ENCODE measurements at regions of chr10 and their contacts with region 1.

Region 1: GRCh38 chr10:74075906-74076305 is 74.7 kb downstream of the AP3M1 start:
- DNase-seq: no peak
- ATAC-seq: no peak
- H3K4me3 ChIP-seq: 0 out of 2 replicates have a peak overlapping the region, but pooled peaks have one; percentile 6
- H3K27ac ChIP-seq: no peak overlapping the region
- H3K4me1 ChIP-seq: peaks cover 29% of the 10 kb centered on the region
- H3K27me3 ChIP-seq: no peaks in the 10 kb centered on the region
- CTCF ChIP-seq: no peak
- EP300 ChIP-seq: no peak
- POLR2A ChIP-seq: no peak
- RAD21 ChIP-seq: no peak

Region 2: GRCh38 chr10:73997787-73998622 is 77.9 kb before region 1 on chr10 and contains the start of gene VCL:
- CTCF ChIA-PET with region 1: interaction called, 11 read pairs
- POLR2A ChIA-PET with region 1: interaction called, 3 read pairs
- RAD21 ChIA-PET with region 1: interaction called, 3 read pairs
- SMC1A ChIA-PET with region 1: interaction called, 18 read pairs
- in situ Hi-C with region 1: no loop called
- intact Hi-C with region 1: no loop called
- DNase-seq: peak; percentile 64
- ATAC-seq: peak; percentile 99
- H3K4me3 ChIP-seq: peak within 1 kb of the TSS; percentile 86
- H3K27ac ChIP-seq: peak within 1 kb of the TSS; percentile 67
- H3K4me1 ChIP-seq: peaks cover 15% of the 10 kb centered on the region
- H3K27me3 ChIP-seq: no peaks in the 10 kb centered on the region
- CTCF ChIP-seq: no peak
- EP300 ChIP-seq: no peak
- POLR2A ChIP-seq: peak; percentile 92
- RAD21 ChIP-seq: no peak
- polyA plus RNA-seq, gene VCL: 6.7 to 9.2 TPM

Region 3: GRCh38 chr10:74058658-74059057 is 17.2 kb before region 1 on chr10:
- CTCF ChIA-PET with region 1: interaction called, 26 read pairs
- POLR2A ChIA-PET with region 1: interaction called, 5 read pairs
- RAD21 ChIA-PET with region 1: interaction called, 29 read pairs
- SMC1A ChIA-PET with region 1: interaction called, 71 read pairs
- in situ Hi-C with region 1: no loop called
- intact Hi-C with region 1: loop called (anchors 2 kb)
- DNase-seq: no peak
- ATAC-seq: peak; percentile 66
- H3K4me3 ChIP-seq: no peak overlapping the region
- H3K27ac ChIP-seq: no peak overlapping the region
- H3K4me1 ChIP-seq: peaks cover 23% of the 10 kb centered on the region
- H3K27me3 ChIP-seq: no peaks in the 10 kb centered on the region
- CTCF ChIP-seq: peak; percentile 4 to 44 (median 30); a peak in 3 of 6 replicates
- EP300 ChIP-seq: no peak
- POLR2A ChIP-seq: no peak
- RAD21 ChIP-seq: peak; percentile 77

Region 4: GRCh38 chr10:74103560-74104248 is 27.8 kb after region 1 on chr10:
- CTCF ChIA-PET with region 1: interaction called, 53 read pairs
- POLR2A ChIA-PET with region 1: interaction called, 4 read pairs
- RAD21 ChIA-PET with region 1: interaction called, 8 read pairs
- SMC1A ChIA-PET with region 1: interaction called, 18 read pairs
- in situ Hi-C with region 1: no loop called
- intact Hi-C with region 1: no loop called
- DNase-seq: no peak
- ATAC-seq: peak; percentile 85
- H3K4me3 ChIP-seq: no peak overlapping the region
- H3K27ac ChIP-seq: no peak overlapping the region
- H3K4me1 ChIP-seq: no peaks in the 10 kb centered on the region
- H3K27me3 ChIP-seq: no peaks in the 10 kb centered on the region
- CTCF ChIP-seq: peak; percentile 52 to 71 (median 67)
- EP300 ChIP-seq: no peak
- POLR2A ChIP-seq: no peak
- RAD21 ChIP-seq: peak; percentile 84

Region 5: GRCh38 chr10:74598891-74599566 is 523.1 kb after region 1 on chr10:
- CTCF ChIA-PET with region 1: no interaction called
- POLR2A ChIA-PET with region 1: no interaction called
- RAD21 ChIA-PET with region 1: no interaction called
- SMC1A ChIA-PET with region 1: no interaction called
- in situ Hi-C with region 1: no loop called
- intact Hi-C with region 1: no loop called
- DNase-seq: peak; percentile 78
- ATAC-seq: peak; percentile 95
- H3K4me3 ChIP-seq: no peak overlapping the region
- H3K27ac ChIP-seq: peak overlapping the region; percentile 46
- H3K4me1 ChIP-seq: peaks cover 19% of the 10 kb centered on the region
- H3K27me3 ChIP-seq: no peaks in the 10 kb centered on the region
- CTCF ChIP-seq: no peak
- EP300 ChIP-seq: peak; percentile 75; a peak in 2 of 4 replicates
- POLR2A ChIP-seq: no peak
- RAD21 ChIP-seq: no peak

Region 6: GRCh38 chr10:75319274-75319673 is 1243.4 kb after region 1 on chr10:
- CTCF ChIA-PET with region 1: no interaction called
- POLR2A ChIA-PET with region 1: no interaction called
- RAD21 ChIA-PET with region 1: no interaction called
- SMC1A ChIA-PET with region 1: no interaction called
- in situ Hi-C with region 1: no loop called
- intact Hi-C with region 1: no loop called
- DNase-seq: no peak
- ATAC-seq: no peak
- H3K4me3 ChIP-seq: no peak overlapping the region
- H3K27ac ChIP-seq: no peak overlapping the region
- H3K4me1 ChIP-seq: no peaks in the 10 kb centered on the region
- H3K27me3 ChIP-seq: no peaks in the 10 kb centered on the region
- CTCF ChIP-seq: no peak
- EP300 ChIP-seq: no peak
- POLR2A ChIP-seq: no peak
- RAD21 ChIP-seq: no peak